Natural killer cell (primary cell): ENCODE measurements at regions of chr2 and their contacts with region 1.

Region 1: DNA sequence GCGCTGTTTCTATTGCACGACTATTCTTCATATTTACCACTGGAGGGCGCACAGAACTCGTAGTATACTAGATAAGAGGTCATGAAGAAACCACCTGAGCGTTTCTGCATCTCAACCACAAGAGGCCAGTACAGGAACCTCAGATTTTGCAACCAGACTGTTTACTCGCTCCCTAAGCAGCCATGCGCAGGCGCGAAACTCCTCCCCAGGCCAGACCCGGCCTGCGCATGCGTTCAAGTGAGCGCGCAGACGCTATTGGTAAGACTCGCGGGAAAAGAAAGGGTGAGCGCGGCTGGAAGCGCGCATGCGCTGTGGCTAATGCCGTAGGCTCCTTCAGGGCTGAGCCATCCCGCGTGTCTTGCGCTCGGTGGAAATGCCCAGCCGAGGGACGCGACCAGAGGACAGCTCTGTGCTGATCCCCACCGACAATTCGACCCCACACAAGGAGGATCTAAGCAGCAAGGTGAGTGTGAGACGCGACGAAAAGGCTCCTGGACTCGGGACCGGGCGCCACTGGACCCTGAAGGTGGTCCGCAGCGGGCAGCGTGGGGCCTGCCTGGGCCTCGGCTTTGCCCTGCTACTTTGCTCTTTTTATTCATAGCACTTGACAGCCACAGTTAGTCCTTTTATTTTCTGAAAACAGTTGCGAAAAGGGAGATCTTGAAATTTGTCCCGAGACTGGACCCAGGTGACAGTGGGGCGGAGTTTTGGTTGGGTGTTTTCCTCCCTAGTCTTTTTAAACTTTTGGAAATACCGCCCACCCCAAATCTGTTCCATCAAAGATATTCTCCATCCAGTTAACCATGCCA is at the start of gene ASNSD1:
- DNase-seq: peak; percentile 98 to 100
- ATAC-seq: peak; percentile 90 to 98 (median 93)
- H3K4me3 ChIP-seq: peak within 1 kb of the TSS; percentile 74
- H3K4me3 Mint-ChIP-seq: no peak within 1 kb of the TSS
- H3K27ac ChIP-seq: peak within 1 kb of the TSS; percentile 84
- H3K27ac Mint-ChIP-seq: no peak within 1 kb of the TSS
- H3K4me1 ChIP-seq: peaks cover 31% of the 10 kb centered on the region
- H3K4me1 Mint-ChIP-seq: peaks cover 25 to 31% of the 10 kb centered on the region in 2 donors
- H3K27me3 ChIP-seq: no peaks in the 10 kb centered on the region
- H3K27me3 Mint-ChIP-seq: no peaks in the 10 kb centered on the region
- CTCF ChIP-seq: peak; percentile 94
- total RNA-seq, gene ASNSD1: 17.5 to 30.4 (median 30.3) TPM

Region 2: GRCh38 chr2:189440947-189441708 is 220.2 kb before region 1 on chr2 and contains the start of gene WDR75:
- intact Hi-C with region 1: loop called (anchors 2 kb)
- DNase-seq: peak; percentile 87 to 96
- ATAC-seq: peak; percentile 94 to 99 (median 94)
- H3K4me3 ChIP-seq: peak within 1 kb of the TSS; percentile 96
- H3K4me3 Mint-ChIP-seq: peak within 1 kb of the TSS; percentile 96
- H3K27ac ChIP-seq: peak within 1 kb of the TSS; percentile 99
- H3K27ac Mint-ChIP-seq: peak within 1 kb of the TSS; percentile 96 to 98
- H3K4me1 ChIP-seq: peaks cover 5% of the 10 kb centered on the region
- H3K4me1 Mint-ChIP-seq: peaks cover 5 to 7% of the 10 kb centered on the region in 2 donors
- H3K27me3 ChIP-seq: no peaks in the 10 kb centered on the region
- H3K27me3 Mint-ChIP-seq: no peaks in the 10 kb centered on the region
- CTCF ChIP-seq: no peak
- total RNA-seq, gene WDR75: 31.4 to 38.5 (median 32.3) TPM

Region 3: DNA sequence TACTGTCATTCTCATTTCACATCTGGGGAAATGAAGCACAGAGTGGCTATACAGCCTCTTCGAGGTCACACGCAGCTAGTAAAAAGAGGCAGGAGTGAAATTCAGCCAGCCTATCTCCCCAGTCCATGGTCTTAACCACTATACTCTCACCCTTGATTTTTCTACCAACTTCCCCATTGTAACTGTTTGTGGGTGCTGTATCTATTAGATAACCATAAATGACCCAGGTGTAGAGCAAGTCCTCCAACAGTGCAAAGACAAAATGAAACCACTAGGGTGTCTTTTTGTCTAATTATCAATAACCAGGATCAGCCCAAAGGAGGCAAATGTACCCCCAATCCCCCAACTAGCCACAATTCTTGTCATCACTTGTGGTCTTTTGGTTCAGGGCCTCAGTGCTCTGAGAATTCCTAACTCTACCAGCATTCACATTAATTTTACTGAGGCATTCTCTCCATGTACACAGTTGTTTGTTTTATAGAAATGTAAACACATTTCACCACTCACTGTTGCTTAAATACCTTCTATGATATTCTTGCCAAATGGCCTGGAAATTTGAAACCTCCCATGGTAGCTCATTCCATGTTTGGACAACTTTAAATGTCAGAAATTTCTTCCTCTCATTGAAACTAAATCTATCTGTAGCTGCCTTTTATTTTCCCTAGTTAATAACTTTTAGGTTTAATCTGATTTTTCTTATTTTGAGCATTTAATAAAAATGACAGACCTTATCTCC is 139.5 kb before region 1 on chr2:
- intact Hi-C with region 1: no loop called
- DNase-seq: no peak
- ATAC-seq: peak in 1 of 3 donors; percentile 67
- H3K4me3 ChIP-seq: no peak overlapping the region
- H3K4me3 Mint-ChIP-seq: no peak overlapping the region
- H3K27ac ChIP-seq: no peak overlapping the region
- H3K27ac Mint-ChIP-seq: no peak overlapping the region
- H3K4me1 ChIP-seq: no peaks in the 10 kb centered on the region
- H3K4me1 Mint-ChIP-seq: no peaks in the 10 kb centered on the region
- H3K27me3 ChIP-seq: no peaks in the 10 kb centered on the region
- H3K27me3 Mint-ChIP-seq: peaks cover 0 to 9% of the 10 kb centered on the region in 2 donors
- CTCF ChIP-seq: no peak

Region 4: GRCh38 chr2:189624648-189625355 is 36.5 kb before region 1 on chr2:
- intact Hi-C with region 1: no loop called
- DNase-seq: no peak
- ATAC-seq: no peak
- H3K4me3 ChIP-seq: no peak overlapping the region
- H3K4me3 Mint-ChIP-seq: no peak overlapping the region
- H3K27ac ChIP-seq: no peak overlapping the region
- H3K27ac Mint-ChIP-seq: no peak overlapping the region
- H3K4me1 ChIP-seq: no peaks in the 10 kb centered on the region
- H3K4me1 Mint-ChIP-seq: peaks cover 3 to 9% of the 10 kb centered on the region in 2 donors
- H3K27me3 ChIP-seq: no peaks in the 10 kb centered on the region
- H3K27me3 Mint-ChIP-seq: no peaks in the 10 kb centered on the region
- CTCF ChIP-seq: no peak

Region 5: GRCh38 chr2:189648846-189649509 is 12.4 kb before region 1 on chr2:
- intact Hi-C with region 1: no loop called
- DNase-seq: no peak
- ATAC-seq: no peak
- H3K4me3 ChIP-seq: no peak overlapping the region
- H3K4me3 Mint-ChIP-seq: no peak overlapping the region
- H3K27ac ChIP-seq: no peak overlapping the region
- H3K27ac Mint-ChIP-seq: no peak overlapping the region
- H3K4me1 ChIP-seq: no peaks in the 10 kb centered on the region
- H3K4me1 Mint-ChIP-seq: no peaks in the 10 kb centered on the region
- H3K27me3 ChIP-seq: no peaks in the 10 kb centered on the region
- H3K27me3 Mint-ChIP-seq: peaks cover 0 to 7% of the 10 kb centered on the region in 2 donors
- CTCF ChIP-seq: no peak

Region 6: GRCh38 chr2:189698020-189698887 is 36.9 kb after region 1 on chr2:
- intact Hi-C with region 1: loop called (anchors 1 kb)
- DNase-seq: peak in 1 of 2 donors; percentile 76
- ATAC-seq: peak; percentile 67 to 76 (median 76)
- H3K4me3 ChIP-seq: no peak overlapping the region
- H3K4me3 Mint-ChIP-seq: peak overlapping the region; percentile 49
- H3K27ac ChIP-seq: no peak overlapping the region
- H3K27ac Mint-ChIP-seq: peak overlapping the region; percentile 46 to 65
- H3K4me1 ChIP-seq: no peaks in the 10 kb centered on the region
- H3K4me1 Mint-ChIP-seq: peaks cover 0 to 11% of the 10 kb centered on the region in 2 donors
- H3K27me3 ChIP-seq: no peaks in the 10 kb centered on the region
- H3K27me3 Mint-ChIP-seq: no peaks in the 10 kb centered on the region
- CTCF ChIP-seq: peak; percentile 89

Region 7: GRCh38 chr2:189783927-189784867 is 122.8 kb after region 1 on chr2 and contains the starts of genes ORMDL1 and PMS1:
- intact Hi-C with region 1: loop called (anchors 1 kb)
- DNase-seq: peak; percentile 97
- ATAC-seq: peak; percentile 85 to 97 (median 87)
- H3K4me3 ChIP-seq: peak within 1 kb of the TSS; percentile 92
- H3K4me3 Mint-ChIP-seq: peak within 1 kb of the TSS; percentile 92
- H3K27ac ChIP-seq: peak within 1 kb of the TSS; percentile 98
- H3K27ac Mint-ChIP-seq: peak within 1 kb of the TSS; percentile 96 to 97
- H3K4me1 ChIP-seq: peaks cover 10% of the 10 kb centered on the region
- H3K4me1 Mint-ChIP-seq: peaks cover 42 to 58% of the 10 kb centered on the region in 2 donors
- H3K27me3 ChIP-seq: no peaks in the 10 kb centered on the region
- H3K27me3 Mint-ChIP-seq: no peaks in the 10 kb centered on the region
- CTCF ChIP-seq: no peak
- total RNA-seq, gene ORMDL1: 83.1 to 103 (median 101) TPM
- total RNA-seq, gene PMS1: 28.9 to 32.3 (median 29.1) TPM

Region 8: DNA sequence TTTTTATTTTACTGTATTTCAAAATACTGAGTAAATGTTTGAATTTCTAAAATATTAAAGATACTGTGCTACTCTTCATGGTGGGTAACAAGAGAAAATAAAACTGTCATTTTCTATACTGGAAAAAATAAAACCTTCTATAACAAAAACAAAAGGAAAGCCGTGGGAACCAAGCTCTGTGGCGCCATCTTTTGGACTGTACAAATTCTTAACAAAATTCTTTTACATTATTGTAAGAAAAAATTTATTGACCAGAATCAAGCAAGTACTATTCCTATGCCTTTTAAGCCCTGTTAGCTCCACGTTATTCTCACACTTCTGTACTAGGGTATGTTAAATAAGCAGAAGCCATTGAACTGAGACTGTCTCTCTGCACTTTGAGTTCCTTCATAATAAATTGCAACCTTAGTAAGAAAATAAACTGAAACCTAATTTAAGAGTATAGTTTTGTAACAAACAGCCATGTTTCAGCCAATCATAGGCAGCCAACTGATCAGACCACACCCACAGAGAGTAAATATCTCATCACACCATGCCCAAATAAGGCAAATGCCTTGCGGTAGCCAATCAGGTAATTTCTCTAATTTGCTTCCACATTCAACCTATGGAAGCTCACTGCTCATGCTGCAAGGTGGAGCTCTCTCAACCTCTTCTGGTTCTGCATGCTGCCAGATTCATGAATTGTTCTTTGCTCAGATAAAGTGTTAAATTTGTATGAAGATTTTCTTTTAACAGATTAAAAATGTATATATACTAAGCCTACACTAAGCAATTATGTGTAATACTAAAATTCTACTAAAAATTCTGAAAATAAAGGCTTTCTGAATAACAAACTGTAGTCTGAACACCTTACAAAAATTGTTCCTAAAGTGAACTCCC is 616.1 kb after region 1 on chr2:
- intact Hi-C with region 1: loop called (anchors 1 kb)
- DNase-seq: peak in 1 of 2 donors; percentile 52
- ATAC-seq: peak in 1 of 3 donors; percentile 28
- H3K4me3 ChIP-seq: no peak overlapping the region
- H3K4me3 Mint-ChIP-seq: no peak overlapping the region
- H3K27ac ChIP-seq: no peak overlapping the region
- H3K27ac Mint-ChIP-seq: no peak overlapping the region
- H3K4me1 ChIP-seq: no peaks in the 10 kb centered on the region
- H3K4me1 Mint-ChIP-seq: peaks cover 2% of the 10 kb centered on the region in 2 donors
- H3K27me3 ChIP-seq: no peaks in the 10 kb centered on the region
- H3K27me3 Mint-ChIP-seq: no peaks in the 10 kb centered on the region
- CTCF ChIP-seq: peak; percentile 45

Region 9: GRCh38 chr2:190528521-190529001 is 867.2 kb after region 1 on chr2:
- intact Hi-C with region 1: loop called (anchors 10 kb)
- DNase-seq: no peak
- ATAC-seq: no peak
- H3K4me3 ChIP-seq: no peak overlapping the region
- H3K4me3 Mint-ChIP-seq: no peak overlapping the region
- H3K27ac ChIP-seq: no peak overlapping the region
- H3K27ac Mint-ChIP-seq: peak overlapping the region in 1 of 2 donors; percentile 12
- H3K4me1 ChIP-seq: peaks cover 13% of the 10 kb centered on the region
- H3K4me1 Mint-ChIP-seq: peaks cover 41 to 49% of the 10 kb centered on the region in 2 donors
- H3K27me3 ChIP-seq: no peaks in the 10 kb centered on the region
- H3K27me3 Mint-ChIP-seq: no peaks in the 10 kb centered on the region
- CTCF ChIP-seq: no peak